Head of caudate nucleus (tissue), 42 donors: ENCODE measurements at regions of chr17 and their contacts with region 1.

Region 1: DNA sequence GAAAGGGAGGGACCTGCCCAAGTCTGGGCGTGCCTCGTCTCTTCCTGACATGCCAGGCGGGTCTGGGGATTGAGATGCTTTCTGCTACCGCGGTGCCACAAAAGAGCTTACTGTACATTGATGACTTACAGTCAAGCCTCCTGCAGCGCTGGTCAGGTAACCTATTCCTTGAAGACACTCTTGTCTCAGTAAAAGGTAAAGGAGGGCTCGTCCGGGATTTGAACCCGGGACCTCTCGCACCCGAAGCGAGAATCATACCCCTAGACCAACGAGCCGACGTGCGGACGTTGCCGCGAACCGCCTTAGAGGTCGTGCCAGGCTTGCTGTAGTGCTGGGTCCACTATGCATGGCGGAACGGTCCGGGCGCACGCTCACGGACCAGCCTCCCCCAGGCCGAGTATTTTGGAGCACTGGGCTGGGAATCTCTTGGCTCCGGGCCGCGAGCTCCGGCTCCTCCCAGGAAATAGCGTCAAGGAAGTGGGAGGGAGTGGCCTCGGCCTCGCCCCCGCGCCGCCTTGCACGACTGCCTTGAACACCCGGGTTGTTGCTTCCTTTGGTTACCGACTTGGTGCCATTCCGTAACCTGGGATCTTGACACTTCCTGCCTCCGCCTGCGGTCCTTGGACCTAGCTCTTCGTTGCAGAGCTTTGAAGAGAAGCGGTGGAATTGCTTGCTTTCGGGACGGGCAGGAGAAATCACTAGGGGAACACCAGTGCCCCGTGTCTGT is 12.4 kb upstream of the AURKB start:
- DNase-seq: peak; percentile 90 to 97 (median 94)

Region 2: GRCh38 chr17:8001976-8002720 is 220.6 kb before region 1 on chr17 and contains the start of gene GUCY2D:
- intact Hi-C with region 1: no loop called
- DNase-seq: peak in 7 of 42 donors; percentile 21 to 44 (median 39)

Region 3: DNA sequence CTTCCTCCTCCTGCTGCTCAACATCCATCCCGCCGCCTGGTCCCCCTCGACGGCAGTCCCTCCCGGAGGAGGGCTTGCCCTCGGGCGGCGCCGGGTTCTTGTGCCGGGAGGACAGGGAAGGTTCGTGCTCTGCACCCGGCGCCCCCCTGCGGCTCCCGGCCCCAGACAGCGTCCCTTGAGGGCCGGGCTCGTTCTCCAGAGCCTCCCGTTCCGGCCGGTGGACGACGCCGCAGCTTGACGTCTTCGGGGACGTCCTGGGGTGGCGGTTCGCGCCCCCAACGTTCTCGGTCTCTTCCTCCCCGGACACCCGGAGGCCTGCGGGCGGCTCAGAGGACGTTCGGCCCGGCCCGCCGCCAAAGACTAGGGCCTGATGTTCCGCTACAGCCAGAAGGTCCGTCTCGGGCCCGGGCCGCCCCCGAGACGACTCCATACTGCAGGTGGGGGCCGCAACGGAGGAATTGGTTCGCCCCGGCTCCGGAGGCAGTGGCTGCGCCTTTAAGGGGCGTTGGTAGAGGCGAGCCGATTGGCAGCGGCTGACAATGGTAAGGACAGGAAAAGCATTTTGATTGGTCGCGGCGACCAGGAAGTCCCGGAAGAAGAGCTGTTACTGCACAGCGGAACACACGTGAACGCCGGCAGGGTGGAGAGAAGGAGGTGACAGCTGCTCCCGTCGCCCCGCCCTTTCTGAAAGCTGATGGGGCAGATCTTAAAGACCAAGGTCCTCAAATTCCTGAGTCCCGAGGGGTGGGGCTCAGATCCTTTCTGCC is 32.9 kb before region 1 on chr17 and contains the start of gene BORCS6:
- intact Hi-C with region 1: loop called (anchors 2 kb)
- DNase-seq: peak; percentile 98 to 100 (median 99)

Region 4: GRCh38 chr17:8266648-8267479 is 44.1 kb after region 1 on chr17:
- intact Hi-C with region 1: no loop called
- DNase-seq: no peak

Region 5: DNA sequence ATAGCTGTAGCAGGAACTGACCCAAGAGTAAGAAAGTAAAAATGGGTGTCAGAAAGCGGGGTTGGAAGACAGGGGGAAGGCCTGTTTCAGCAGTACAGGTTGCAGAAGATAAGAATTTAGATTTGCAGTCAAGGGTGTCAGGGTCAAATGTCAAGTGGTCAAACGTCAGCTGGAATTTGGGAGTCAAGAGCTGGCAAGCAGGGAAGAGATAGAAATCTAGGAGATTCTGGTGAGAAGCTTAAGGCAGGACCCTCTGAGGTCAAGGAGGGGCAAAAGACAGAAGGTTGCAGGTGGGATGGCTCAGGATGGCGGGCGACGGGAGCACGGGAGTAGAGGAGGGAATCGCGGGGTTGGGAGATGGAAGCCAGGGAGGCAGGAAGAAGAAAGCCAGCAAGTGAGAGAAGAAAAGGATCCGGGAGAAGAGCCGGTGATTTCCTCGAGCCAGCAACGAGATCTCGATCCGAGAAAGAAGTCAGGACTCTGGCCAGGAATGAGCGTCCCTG is 72.1 kb after region 1 on chr17:
- intact Hi-C with region 1: loop called (anchors 10 kb)
- DNase-seq: peak in 1 of 42 donors; percentile 9